H1 (cell line): ENCODE measurements at regions of chr16 and their contacts with region 1.

Region 1: GRCh38 chr16:85420501-85421337 is 192.4 kb upstream of the GSE1 start:
- DNase-seq: peak in 1 of 2 experiments; percentile 96
- H3K4me3 ChIP-seq: no peak overlapping the region
- H3K27ac ChIP-seq: no peak overlapping the region
- H3K4me1 ChIP-seq: peaks cover 0 to 21% (median 5%) of the 10 kb centered on the region in 4 experiments; a peak in 5 of 7 replicates
- H3K27me3 ChIP-seq: no peaks in the 10 kb centered on the region
- CTCF ChIP-seq: peak; percentile 98 to 99 (median 99)
- EP300 ChIP-seq: no peak
- POLR2A ChIP-seq: no peak
- RAD21 ChIP-seq: peak; percentile 77 to 81

Region 2: GRCh38 chr16:85220125-85220839 is 200.4 kb before region 1 on chr16:
- CTCF ChIA-PET with region 1: no interaction called
- POLR2A ChIA-PET with region 1: no interaction called
- DNase-seq: no peak
- H3K4me3 ChIP-seq: no peak overlapping the region
- H3K27ac ChIP-seq: no peak overlapping the region
- H3K4me1 ChIP-seq: peaks cover 7 to 34% (median 18%) of the 10 kb centered on the region in 4 experiments
- H3K27me3 ChIP-seq: no peaks in the 10 kb centered on the region
- CTCF ChIP-seq: no peak
- EP300 ChIP-seq: no peak
- POLR2A ChIP-seq: no peak
- RAD21 ChIP-seq: no peak

Region 3: DNA sequence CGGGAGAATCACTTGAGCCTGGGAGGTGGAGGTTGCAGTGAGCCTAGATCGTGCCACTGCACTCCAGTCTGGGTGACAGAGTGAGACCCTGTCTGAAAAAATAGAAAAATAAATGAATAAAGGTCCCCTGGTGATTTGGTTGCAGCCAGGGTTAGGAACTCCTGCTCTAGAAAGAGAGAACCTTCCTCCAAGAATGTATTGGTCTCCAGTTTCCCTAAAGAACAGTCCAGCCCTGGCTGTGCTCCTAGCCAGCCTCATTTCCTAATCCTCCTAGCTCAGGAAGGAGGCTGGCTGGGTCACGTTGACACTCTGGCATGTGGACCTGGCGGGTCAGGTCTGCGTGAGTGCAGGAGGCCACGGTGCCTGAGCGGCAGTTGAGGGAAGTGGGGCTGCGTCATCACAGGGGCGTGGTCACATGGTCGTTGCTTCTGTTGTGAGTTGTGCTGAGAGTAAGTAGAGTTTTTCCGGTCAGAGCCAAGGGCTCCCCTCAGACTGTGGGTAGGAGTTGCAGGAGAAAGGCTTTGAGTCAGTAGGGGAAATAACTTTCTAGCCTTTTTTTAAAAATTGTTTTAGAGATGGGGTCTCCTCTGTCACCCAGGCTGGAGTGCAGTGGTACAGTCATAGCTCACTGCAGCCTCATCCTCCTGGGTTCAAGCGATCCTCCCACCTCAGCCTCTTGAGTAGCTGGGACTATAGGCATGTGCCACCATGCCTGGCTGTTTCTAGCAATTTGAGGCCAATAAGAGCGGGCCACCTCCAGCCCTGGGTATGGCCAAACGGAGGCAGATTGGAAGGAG is 114.5 kb before region 1 on chr16:
- CTCF ChIA-PET with region 1: interaction called, 11 read pairs
- POLR2A ChIA-PET with region 1: no interaction called
- DNase-seq: no peak
- H3K4me3 ChIP-seq: no peak overlapping the region
- H3K27ac ChIP-seq: no peak overlapping the region
- H3K4me1 ChIP-seq: peaks cover 3 to 27% (median 23%) of the 10 kb centered on the region in 4 experiments
- H3K27me3 ChIP-seq: 0 out of 7 replicates have a peak, but pooled peaks cover 0 to 4% (median 0%) of the 10 kb centered on the region in 4 experiments
- CTCF ChIP-seq: no peak
- EP300 ChIP-seq: no peak
- POLR2A ChIP-seq: no peak
- RAD21 ChIP-seq: no peak

Region 4: GRCh38 chr16:85369741-85370528 is 50.8 kb before region 1 on chr16:
- CTCF ChIA-PET with region 1: interaction called, 11 read pairs
- POLR2A ChIA-PET with region 1: no interaction called
- DNase-seq: peak in 1 of 2 experiments; percentile 97
- H3K4me3 ChIP-seq: no peak overlapping the region
- H3K27ac ChIP-seq: no peak overlapping the region
- H3K4me1 ChIP-seq: peaks cover 8 to 18% (median 16%) of the 10 kb centered on the region in 4 experiments
- H3K27me3 ChIP-seq: peaks cover 0 to 11% (median 3%) of the 10 kb centered on the region in 4 experiments; a peak in 3 of 7 replicates
- CTCF ChIP-seq: peak; percentile 74 to 87 (median 80)
- EP300 ChIP-seq: no peak
- POLR2A ChIP-seq: no peak
- RAD21 ChIP-seq: peak; percentile 48 to 64

Region 5: GRCh38 chr16:85448557-85449197 is 28.0 kb after region 1 on chr16:
- CTCF ChIA-PET with region 1: interaction called, 178 read pairs
- POLR2A ChIA-PET with region 1: no interaction called
- DNase-seq: no peak
- H3K4me3 ChIP-seq: no peak overlapping the region
- H3K27ac ChIP-seq: no peak overlapping the region
- H3K4me1 ChIP-seq: peaks cover 0 to 23% (median 16%) of the 10 kb centered on the region in 4 experiments; a peak in 6 of 7 replicates
- H3K27me3 ChIP-seq: no peaks in the 10 kb centered on the region
- CTCF ChIP-seq: no peak
- EP300 ChIP-seq: no peak
- POLR2A ChIP-seq: no peak
- RAD21 ChIP-seq: no peak

Region 6: GRCh38 chr16:85503679-85504231 is 83.0 kb after region 1 on chr16:
- CTCF ChIA-PET with region 1: interaction called, 10 read pairs
- POLR2A ChIA-PET with region 1: no interaction called
- DNase-seq: no peak
- H3K4me3 ChIP-seq: no peak overlapping the region
- H3K27ac ChIP-seq: no peak overlapping the region
- H3K4me1 ChIP-seq: peaks cover 2 to 14% (median 11%) of the 10 kb centered on the region in 4 experiments; a peak in 6 of 7 replicates
- H3K27me3 ChIP-seq: no peaks in the 10 kb centered on the region; a peak in 1 of 7 replicates
- CTCF ChIP-seq: no peak
- EP300 ChIP-seq: no peak
- POLR2A ChIP-seq: no peak
- RAD21 ChIP-seq: no peak

Region 7: DNA sequence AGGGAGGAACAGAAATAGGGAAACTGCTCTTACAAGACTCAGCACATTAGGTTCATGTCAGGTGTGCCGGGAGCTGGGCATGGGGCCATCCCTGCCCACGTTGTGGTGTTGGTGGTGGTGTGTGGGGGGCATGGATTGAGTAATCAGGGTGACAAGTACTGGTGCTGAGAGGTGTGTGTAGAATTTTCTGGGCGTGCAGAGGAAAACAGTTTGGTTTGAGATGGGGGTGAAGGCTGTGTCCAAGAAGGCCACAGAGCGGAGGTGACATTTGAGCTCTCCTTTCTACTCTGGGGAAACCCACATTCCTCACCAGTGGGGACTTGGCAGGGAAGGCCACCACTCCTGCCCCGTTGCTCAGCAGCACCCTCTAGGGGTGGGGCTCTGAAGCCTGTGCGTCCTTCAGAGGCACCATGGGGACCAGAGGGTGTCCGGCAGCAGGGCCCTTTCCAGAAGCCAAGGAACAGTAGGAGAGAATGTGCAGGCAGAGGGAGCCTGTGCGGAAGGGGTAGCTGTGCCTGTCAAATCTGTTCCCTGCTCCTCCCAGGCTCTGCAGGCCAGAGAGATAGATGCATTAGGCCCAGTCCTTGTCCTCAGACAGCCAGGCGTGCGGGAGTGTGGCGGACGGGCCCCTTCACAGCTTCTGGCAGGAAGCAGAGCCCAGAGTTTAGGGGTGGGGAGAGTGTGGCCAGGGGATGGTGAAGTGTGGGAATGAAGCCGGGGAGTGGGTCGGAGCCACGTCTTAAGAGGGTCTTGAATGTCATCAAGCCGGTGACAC is 143.7 kb after region 1 on chr16:
- CTCF ChIA-PET with region 1: interaction called, 19 read pairs
- POLR2A ChIA-PET with region 1: no interaction called
- DNase-seq: no peak
- H3K4me3 ChIP-seq: no peak overlapping the region
- H3K27ac ChIP-seq: no peak overlapping the region
- H3K4me1 ChIP-seq: peaks cover 14 to 52% (median 27%) of the 10 kb centered on the region in 4 experiments
- H3K27me3 ChIP-seq: no peaks in the 10 kb centered on the region
- CTCF ChIP-seq: peak; percentile 53 to 70 (median 68)
- EP300 ChIP-seq: no peak
- POLR2A ChIP-seq: no peak
- RAD21 ChIP-seq: peak in 1 of 2 experiments; percentile 18; a peak in 1 of 4 replicates

Region 8: GRCh38 chr16:85615852-85616606 is 195.3 kb after region 1 on chr16:
- CTCF ChIA-PET with region 1: interaction called, 79 read pairs
- POLR2A ChIA-PET with region 1: interaction called, 3 read pairs
- DNase-seq: peak in 1 of 2 experiments; percentile 98
- H3K4me3 ChIP-seq: peak overlapping the region in 3 of 4 experiments; percentile 58 to 92 (median 67); a peak in 4 of 8 replicates
- H3K27ac ChIP-seq: no peak overlapping the region
- H3K4me1 ChIP-seq: peaks cover 4 to 37% (median 27%) of the 10 kb centered on the region in 4 experiments
- H3K27me3 ChIP-seq: no peaks in the 10 kb centered on the region
- CTCF ChIP-seq: peak in 2 of 3 experiments; percentile 92 to 97; a peak in 3 of 4 replicates
- EP300 ChIP-seq: no peak
- POLR2A ChIP-seq: no peak
- RAD21 ChIP-seq: peak; percentile 68 to 74